ENCODE measurements at regions of chr7 and their contacts with region 1.

Region 1: DNA sequence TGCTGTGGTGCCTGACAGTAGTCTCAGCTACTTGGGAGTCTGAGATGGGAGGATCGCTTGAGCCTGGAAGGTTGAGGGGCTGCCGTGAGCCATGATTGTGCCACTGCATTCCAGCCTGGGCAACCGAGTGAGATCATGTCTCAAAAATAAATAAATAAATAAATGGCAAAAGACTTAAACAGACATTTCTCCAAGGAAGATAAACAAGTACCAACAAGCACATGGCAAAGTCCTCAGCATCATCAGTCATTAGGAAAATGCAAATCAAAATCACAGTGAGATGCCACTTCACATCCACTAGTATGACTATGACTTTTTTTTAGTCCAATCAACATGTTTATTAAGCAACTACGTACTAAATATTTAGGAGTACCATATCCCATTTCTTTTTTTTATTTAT is 21.3 kb upstream of the KPNA7 start:
- DNase-seq: no peak
- H3K4me3 ChIP-seq: no peak overlapping the region
- H3K27ac ChIP-seq: no peak overlapping the region
- H3K4me1 ChIP-seq: peaks cover 25% of the 10 kb centered on the region
- H3K27me3 ChIP-seq: no peaks in the 10 kb centered on the region
- CTCF ChIP-seq: no peak

Region 2: GRCh38 chr7:99167072-99167471 is 62.2 kb before region 1 on chr7:
- CTCF ChIA-PET with region 1: no interaction called
- POLR2A ChIA-PET with region 1: no interaction called
- intact Hi-C with region 1: loop called (anchors 1 kb)
- DNase-seq: no peak
- H3K4me3 ChIP-seq: no peak overlapping the region
- H3K27ac ChIP-seq: no peak overlapping the region
- H3K4me1 ChIP-seq: peaks cover 13% of the 10 kb centered on the region
- H3K27me3 ChIP-seq: no peaks in the 10 kb centered on the region
- CTCF ChIP-seq: no peak

Region 3: DNA sequence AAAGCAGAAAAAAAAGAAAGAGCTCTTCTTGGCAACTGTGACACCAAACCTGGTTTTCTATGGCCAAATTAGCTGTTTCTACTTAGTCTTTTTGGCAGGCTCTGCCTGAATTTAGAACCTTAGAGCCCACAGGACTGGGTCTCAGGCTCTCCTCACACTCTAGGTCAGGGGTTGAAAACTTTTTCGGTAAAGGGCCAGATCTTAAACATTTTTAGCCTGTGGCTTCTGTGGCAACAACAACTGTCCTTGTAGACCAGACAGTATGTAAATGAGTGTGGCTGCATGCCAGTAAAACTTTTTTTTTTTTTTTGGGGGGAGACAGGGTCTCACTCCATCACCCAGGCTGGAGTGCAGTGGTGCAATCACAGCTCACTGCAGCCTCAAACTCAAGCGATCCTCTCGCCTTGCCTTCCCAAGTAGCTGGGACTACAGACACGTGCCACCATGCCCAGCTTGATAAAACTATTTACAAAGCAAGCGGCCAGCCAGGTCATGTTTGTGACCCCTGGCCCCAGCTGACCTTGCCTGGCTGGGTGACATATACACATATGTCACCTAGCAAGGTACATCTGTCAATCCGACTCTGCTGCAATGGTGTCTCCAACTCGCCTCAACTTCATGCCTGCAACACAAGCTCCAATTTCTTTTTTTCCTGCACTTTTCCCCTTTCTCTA is 38.7 kb before region 1 on chr7:
- CTCF ChIA-PET with region 1: no interaction called
- POLR2A ChIA-PET with region 1: interaction called, 11 read pairs
- intact Hi-C with region 1: no loop called
- DNase-seq: no peak
- H3K4me3 ChIP-seq: no peak overlapping the region
- H3K27ac ChIP-seq: no peak overlapping the region
- H3K4me1 ChIP-seq: peaks cover 17% of the 10 kb centered on the region
- H3K27me3 ChIP-seq: no peaks in the 10 kb centered on the region
- CTCF ChIP-seq: no peak

Region 4: DNA sequence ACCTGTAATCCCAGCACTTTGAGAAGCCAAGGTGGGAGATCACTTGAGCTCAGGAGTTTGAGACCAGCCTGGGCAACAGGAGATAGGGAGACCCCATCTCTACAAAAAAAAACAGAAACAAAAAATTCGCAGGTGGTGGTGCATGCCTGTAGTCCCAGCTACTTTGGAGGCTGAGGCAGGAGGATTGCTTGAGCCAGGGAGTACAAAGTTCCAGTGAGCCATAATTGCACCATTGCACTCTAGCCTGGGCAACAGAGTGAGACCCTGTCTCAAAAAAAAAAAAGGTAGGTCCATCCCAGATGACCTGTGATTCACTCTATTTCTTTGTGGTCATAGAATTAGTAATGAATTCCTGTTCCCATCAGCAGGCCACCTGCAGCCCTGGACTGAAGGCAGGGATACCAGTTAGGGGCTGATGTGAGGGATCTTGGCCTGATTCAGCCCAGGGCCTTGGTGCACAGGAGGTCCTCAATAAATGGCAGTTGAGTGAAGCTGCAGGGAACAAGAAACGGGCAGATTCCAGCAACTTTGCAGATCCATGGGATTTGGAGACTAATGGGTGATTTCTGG is 43.3 kb after region 1 on chr7 and contains the start of gene MYH16:
- CTCF ChIA-PET with region 1: interaction called, 5 read pairs
- POLR2A ChIA-PET with region 1: interaction called, 3 read pairs
- intact Hi-C with region 1: loop called (anchors 2 kb)
- DNase-seq: peak; percentile 44 to 73
- H3K4me3 ChIP-seq: peak within 1 kb of the TSS; percentile 24; the same call in 1 of the 2 replicates
- H3K27ac ChIP-seq: peak within 1 kb of the TSS; percentile 95
- H3K4me1 ChIP-seq: peaks cover 59% of the 10 kb centered on the region
- H3K27me3 ChIP-seq: no peaks in the 10 kb centered on the region
- CTCF ChIP-seq: no peak
- total RNA-seq, gene MYH16: 11.7 and 18.0 TPM in 2 replicates